Right ventricle myocardium superior (tissue), 1 donor: ENCODE measurements at regions of chr1 and their contacts with region 1.

Region 1: DNA sequence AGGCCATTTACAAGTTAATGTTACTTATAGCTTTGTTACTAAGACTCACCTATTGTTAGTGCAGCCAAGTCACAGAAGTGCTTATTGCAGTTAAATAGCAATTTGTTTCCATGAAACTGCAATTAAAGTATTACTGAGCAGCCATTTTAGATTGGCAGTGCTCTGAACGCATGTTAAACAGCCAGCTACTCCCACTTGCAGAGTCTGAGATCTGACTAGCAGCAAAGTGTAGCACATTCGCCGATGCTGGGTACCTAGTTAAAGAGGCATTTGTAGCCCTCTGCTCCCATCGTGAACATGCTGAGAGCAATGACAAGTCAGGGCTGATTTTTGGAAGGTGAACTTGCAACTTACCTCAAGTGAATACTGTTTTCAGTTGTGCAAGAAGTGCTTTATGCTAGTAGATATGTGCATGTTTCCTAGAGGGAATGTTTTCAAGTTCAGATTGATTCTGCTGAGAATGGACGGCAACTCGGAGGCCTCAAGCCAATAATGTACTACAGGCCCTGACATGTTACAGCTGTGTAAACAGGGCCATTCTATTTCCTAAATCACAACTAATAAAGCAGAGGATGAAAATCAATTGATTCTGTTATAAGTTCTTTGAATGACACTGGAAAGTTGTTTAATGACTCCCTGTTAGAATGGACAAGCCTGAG is 19.8 kb downstream of the LMO4 start:
- DNase-seq: no peak
- ATAC-seq: no peak

Region 2: DNA sequence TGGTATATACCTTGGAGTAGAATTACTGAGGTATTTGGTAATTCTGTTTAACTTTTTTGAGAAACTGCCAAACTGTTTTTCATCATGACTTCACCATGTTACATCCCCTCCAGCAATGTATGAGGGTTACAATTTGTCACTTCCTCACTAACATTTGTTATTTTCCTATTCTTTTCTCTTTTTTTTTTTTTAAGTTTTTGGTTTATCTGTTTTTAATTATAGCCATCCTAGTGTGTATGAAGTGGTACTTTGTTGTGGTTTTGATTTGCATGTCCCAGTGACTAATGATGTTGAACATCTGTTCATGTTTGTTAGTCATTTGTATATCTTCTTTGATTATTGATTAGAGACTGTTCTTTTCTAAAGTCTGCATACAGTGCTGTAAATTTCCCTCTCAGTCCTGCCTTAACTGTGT is 286.7 kb before region 1 on chr1:
- intact Hi-C with region 1: no loop called
- DNase-seq: no peak
- ATAC-seq: no peak

Region 3: GRCh38 chr1:87449348-87449963 is 101.0 kb after region 1 on chr1:
- intact Hi-C with region 1: loop called (anchors 10 kb)
- DNase-seq: peak; percentile 54
- ATAC-seq: peak; percentile 96

Region 4: DNA sequence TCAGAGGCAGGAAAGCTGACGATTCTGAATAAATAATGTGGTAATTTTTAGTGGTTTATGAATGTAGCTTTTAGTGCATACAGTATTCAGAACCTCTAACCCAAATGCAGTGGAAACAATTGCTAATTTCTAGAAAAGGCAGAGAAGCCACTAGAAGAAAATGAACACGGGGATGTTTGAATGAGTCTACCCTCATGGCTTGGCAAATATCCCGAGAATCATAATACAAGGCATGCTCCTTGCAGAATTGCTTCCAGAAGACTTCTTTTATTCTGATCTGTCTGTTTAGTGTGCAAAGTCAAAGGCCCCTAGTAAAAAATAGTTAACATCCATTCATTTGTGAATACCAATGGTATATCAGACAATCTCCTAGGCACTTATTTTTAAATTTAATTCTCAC is 227.1 kb after region 1 on chr1:
- intact Hi-C with region 1: no loop called
- DNase-seq: no peak
- ATAC-seq: no peak